GM18951 (cell line): ENCODE measurements at regions of chr7 and their contacts with region 1.

Region 1: GRCh38 chr7:22109761-22110160 is 164.1 kb upstream of the CDCA7L start:
- POLR2A ChIP-seq: no peak

Region 2: GRCh38 chr7:22488643-22489462 is 379.1 kb after region 1 on chr7:
- in situ Hi-C with region 1: loop called (anchors 5 kb)
- POLR2A ChIP-seq: no peak